Gastrocnemius medialis (tissue), 4 donors: ENCODE measurements at regions of chr19 and their contacts with region 1.

Region 1: GRCh38 chr19:10565567-10566407 is at the start of gene KRI1:
- DNase-seq: peak; percentile 97
- ATAC-seq: peak; percentile 77 to 80
- H3K4me3 ChIP-seq: peak within 1 kb of the TSS; percentile 68 to 94 (median 86)
- H3K27ac ChIP-seq: peak within 1 kb of the TSS; percentile 84 to 92 (median 92)
- H3K4me1 ChIP-seq: peaks cover 34 to 35% of the 10 kb centered on the region in 2 donors
- H3K27me3 ChIP-seq: no peaks in the 10 kb centered on the region
- CTCF ChIP-seq: peak; percentile 34 to 75 (median 55)
- POLR2A ChIP-seq: peak; percentile 80 to 94
- total RNA-seq, gene KRI1: 16.8 to 24.1 (median 19.9) TPM

Region 2: DNA sequence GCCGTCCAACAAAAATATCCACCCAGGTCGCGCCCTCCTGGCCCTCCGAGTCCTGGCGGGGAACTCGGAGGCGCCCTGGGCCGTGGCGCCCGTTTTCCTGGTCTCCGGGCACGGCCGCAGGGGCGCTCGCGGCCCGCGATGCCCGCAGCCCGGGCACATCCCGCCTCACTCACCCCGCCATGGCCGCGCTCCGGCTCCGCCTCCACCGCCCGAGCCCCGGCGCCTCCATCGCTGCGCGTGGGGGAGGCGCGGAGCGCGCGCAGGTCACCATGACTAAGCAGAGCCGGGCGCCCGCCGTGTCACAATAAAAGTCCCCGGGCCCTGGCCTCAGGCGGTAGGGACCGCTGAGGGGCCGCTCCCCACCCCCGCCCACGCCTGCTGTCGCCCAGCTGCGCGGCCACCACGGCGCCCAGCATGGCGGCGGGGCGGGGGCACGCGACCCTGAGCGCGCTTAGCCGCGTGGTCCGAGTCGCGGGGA is 63.2 kb before region 1 on chr19:
- in situ Hi-C with region 1: loop called in 1 of 4 experiments (anchors 10 kb)
- intact Hi-C with region 1: loop called (anchors 1 kb)
- DNase-seq: peak; percentile 89 to 94
- ATAC-seq: peak; percentile 79 to 89
- H3K4me3 ChIP-seq: peak overlapping the region; percentile 77 to 96 (median 92)
- H3K27ac ChIP-seq: peak overlapping the region; percentile 96 to 100 (median 98)
- H3K4me1 ChIP-seq: peaks cover 30 to 39% of the 10 kb centered on the region in 2 donors
- H3K27me3 ChIP-seq: no peaks in the 10 kb centered on the region
- CTCF ChIP-seq: peak in 2 of 5 experiments; percentile 25 to 41
- POLR2A ChIP-seq: peak; percentile 82 to 84